ENCODE measurements at regions of chr20 and their contacts with region 1.

Region 1: DNA sequence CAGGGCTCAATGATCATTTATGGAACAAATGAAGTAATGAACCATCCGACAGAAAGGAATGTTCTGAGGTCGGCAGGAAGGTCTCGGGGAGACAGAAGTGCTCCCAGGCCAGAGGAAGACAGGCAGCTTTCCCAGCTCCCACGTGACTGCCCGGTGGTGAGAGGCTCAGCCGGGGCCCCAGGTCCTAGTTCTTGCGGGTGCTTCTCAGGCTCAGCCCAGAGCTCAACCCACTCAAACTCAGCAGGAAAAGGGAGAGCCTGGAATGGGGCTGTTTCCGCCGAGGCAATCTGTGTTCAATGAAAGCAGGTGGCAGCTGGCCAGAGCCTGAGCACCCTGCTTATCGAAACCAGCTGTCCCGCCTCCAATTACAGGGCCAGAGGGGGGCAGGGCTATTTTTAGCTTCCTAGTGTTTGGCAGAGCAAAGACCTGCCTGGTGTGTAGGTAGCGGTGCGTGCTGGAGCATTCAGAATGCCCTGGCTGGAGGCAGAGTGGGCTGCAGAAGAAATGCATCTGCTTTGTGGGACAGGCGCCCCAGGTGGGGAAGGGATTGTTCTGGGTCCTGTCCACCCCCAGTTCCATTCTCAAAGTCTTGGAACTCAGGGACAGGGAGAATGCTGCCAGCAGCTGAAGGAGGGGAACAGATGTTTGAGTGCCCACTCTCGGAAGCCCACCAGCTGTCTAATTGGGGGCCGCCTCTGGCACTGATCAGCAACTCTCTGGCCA is 145.1 kb downstream of the PREX1 start:
- DNase-seq: peak; percentile 71
- ATAC-seq: peak; percentile 86
- H3K4me3 Mint-ChIP-seq: no peak overlapping the region
- H3K27ac Mint-ChIP-seq: no peak overlapping the region
- H3K4me1 Mint-ChIP-seq: peaks cover 31% of the 10 kb centered on the region
- H3K27me3 Mint-ChIP-seq: no peaks in the 10 kb centered on the region
- CTCF ChIP-seq: no peak

Region 2: GRCh38 chr20:48697879-48698724 is 15.4 kb after region 1 on chr20:
- CTCF ChIA-PET with region 1: interaction called, 11 read pairs
- POLR2A ChIA-PET with region 1: interaction called, 5 read pairs
- DNase-seq: no peak
- ATAC-seq: no peak
- H3K4me3 Mint-ChIP-seq: no peak overlapping the region
- H3K27ac Mint-ChIP-seq: no peak overlapping the region
- H3K4me1 Mint-ChIP-seq: peaks cover 12% of the 10 kb centered on the region
- H3K27me3 Mint-ChIP-seq: no peaks in the 10 kb centered on the region
- CTCF ChIP-seq: no peak

Region 3: DNA sequence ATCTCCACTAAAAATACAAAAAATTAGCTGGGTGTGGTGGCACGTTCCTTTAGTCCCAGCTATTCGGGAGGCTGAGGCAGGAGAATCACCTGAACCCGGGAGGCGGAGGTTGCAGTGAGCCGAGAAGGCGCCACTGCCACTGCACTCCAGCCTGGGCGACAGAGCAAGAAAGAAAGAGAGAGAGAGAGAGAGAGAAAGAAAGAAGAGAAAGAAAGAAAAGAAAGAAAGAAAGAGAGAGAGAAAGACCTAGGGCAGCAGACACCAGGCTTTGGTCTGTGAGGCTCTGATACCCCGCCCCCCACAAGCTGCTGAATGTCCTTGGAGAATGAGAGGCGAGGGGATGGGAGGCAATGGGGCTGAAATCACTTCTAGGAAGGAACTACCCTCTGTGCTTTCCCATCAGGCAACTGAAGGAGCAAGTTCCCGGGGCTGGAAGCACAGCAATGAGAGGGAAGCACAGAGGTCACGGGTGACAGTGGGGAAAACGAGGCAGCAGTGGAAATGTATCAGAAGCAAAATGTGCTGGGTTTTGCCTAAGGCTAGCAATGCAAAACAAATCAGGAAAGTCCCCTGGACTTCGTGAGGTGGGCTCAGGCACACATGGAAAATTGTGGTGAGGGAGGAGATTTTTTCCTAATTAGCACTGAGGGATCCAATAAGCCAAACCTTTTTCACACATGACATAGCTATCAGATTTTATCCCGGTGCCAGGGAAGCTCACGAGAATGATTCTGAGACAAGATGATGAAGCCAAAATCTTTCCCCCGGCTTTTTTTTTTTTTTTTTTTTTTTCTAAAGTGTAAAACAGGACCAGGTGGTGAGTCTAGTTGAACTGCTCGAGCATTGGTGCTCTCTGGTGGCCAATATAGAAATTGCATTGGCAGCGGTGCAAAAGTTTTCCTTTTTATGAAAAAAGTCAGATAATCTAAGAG is 221.9 kb after region 1 on chr20:
- CTCF ChIA-PET with region 1: interaction called, 10 read pairs
- POLR2A ChIA-PET with region 1: no interaction called
- DNase-seq: peak; percentile 70
- ATAC-seq: peak; percentile 88
- H3K4me3 Mint-ChIP-seq: peak overlapping the region; percentile 54
- H3K27ac Mint-ChIP-seq: no peak overlapping the region; the same call in 1 of the 2 replicates
- H3K4me1 Mint-ChIP-seq: peaks cover 7% of the 10 kb centered on the region
- H3K27me3 Mint-ChIP-seq: no peaks in the 10 kb centered on the region
- CTCF ChIP-seq: peak; percentile 81